Mammary epithelial cell (primary cell): ENCODE measurements at regions of chr3 and their contacts with region 1.

Region 1: DNA sequence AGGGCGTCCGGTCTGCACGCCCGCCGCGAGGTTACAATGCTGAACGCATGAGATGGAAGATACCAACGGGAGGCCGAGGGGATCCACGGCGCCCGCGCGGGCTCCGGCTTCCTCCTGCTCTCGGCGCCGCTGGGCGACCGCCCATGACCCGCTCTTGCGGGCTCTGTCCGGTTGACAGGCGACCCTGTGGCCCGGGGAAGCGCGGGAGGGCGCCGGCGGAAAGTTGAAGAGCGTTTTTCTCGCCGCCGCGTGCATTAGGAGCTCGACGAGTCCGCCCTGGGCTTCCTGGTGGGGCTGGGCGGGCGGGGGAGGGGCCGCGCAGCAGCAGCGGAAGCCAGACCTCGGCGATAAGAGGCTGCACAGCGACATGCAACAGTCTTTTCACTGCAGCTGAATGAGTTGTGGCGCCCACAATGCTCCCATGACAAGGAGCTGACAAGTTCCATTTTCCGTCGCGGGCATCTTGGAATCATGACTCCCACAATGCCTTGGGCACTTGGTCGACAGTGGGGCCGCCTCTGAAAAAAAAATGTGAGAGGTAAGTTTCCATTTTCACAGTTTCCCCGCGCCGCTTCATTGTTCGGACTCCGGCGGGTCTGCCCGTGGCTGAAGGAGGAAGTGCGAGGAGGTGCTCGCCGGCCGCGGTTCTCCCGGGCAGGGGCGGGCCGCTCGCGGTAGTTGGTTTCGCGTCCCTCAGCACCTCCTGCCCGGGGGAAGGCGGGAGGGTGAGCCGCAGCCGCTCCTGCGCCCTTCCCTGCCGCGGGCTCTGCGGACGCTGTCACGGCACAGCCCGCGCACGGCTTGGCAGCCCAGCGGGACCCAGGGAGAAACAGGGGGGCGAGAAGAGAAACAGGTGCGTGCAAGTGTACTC is at the start of gene MBNL1:
- DNase-seq: peak; percentile 78
- H3K4me3 ChIP-seq: peak within 1 kb of the TSS; percentile 62 to 87 (median 66)
- H3K27ac ChIP-seq: peak within 1 kb of the TSS; percentile 90
- H3K4me1 ChIP-seq: peaks cover 33% of the 10 kb centered on the region
- H3K27me3 ChIP-seq: no peaks in the 10 kb centered on the region
- CTCF ChIP-seq: no peak
- total RNA-seq, gene MBNL1: 107 to 188 TPM

Region 2: GRCh38 chr3:151871639-151872468 is 396.9 kb before region 1 on chr3:
- CTCF ChIA-PET with region 1: no interaction called
- dilution Hi-C with region 1: no loop called
- in situ Hi-C with region 1: no loop called
- intact Hi-C with region 1: no loop called
- DNase-seq: no peak
- H3K4me3 ChIP-seq: no peak overlapping the region
- H3K27ac ChIP-seq: no peak overlapping the region
- H3K4me1 ChIP-seq: no peaks in the 10 kb centered on the region
- H3K27me3 ChIP-seq: no peaks in the 10 kb centered on the region
- CTCF ChIP-seq: no peak

Region 3: GRCh38 chr3:152026033-152026556 is 242.7 kb before region 1 on chr3:
- CTCF ChIA-PET with region 1: no interaction called
- dilution Hi-C with region 1: no loop called
- in situ Hi-C with region 1: no loop called
- intact Hi-C with region 1: loop called (anchors 5 kb)
- DNase-seq: peak; percentile 66
- H3K4me3 ChIP-seq: peak overlapping the region in 1 of 3 experiments; percentile 33
- H3K27ac ChIP-seq: peak overlapping the region; percentile 67
- H3K4me1 ChIP-seq: peaks cover 36% of the 10 kb centered on the region
- H3K27me3 ChIP-seq: no peaks in the 10 kb centered on the region
- CTCF ChIP-seq: peak; percentile 13 to 20

Region 4: DNA sequence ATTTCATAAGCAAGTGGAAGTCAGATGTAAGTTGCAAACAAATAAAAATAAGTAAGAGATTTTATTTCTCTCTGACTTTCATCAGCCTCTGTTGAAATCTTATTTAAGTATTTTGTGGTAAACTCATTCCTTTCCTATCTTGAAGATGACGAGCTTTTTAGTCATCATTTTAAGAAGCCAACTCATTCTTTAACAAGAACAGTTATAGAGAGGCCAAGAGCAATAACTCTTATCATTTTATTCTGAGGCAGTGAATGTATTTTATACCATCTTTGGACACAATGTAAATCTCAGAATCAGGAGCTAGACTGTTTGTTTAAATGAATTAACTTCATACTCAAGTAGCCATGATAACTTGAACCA is 147.5 kb before region 1 on chr3:
- CTCF ChIA-PET with region 1: no interaction called
- dilution Hi-C with region 1: no loop called
- in situ Hi-C with region 1: no loop called
- intact Hi-C with region 1: loop called (anchors 1 kb)
- DNase-seq: peak; percentile 77
- H3K4me3 ChIP-seq: peak overlapping the region in 1 of 3 experiments; percentile 33
- H3K27ac ChIP-seq: peak overlapping the region; percentile 78
- H3K4me1 ChIP-seq: peaks cover 38% of the 10 kb centered on the region
- H3K27me3 ChIP-seq: no peaks in the 10 kb centered on the region
- CTCF ChIP-seq: no peak

Region 5: GRCh38 chr3:152298393-152299242 is 29.8 kb after region 1 on chr3:
- CTCF ChIA-PET with region 1: no interaction called
- dilution Hi-C with region 1: no loop called
- in situ Hi-C with region 1: no loop called
- intact Hi-C with region 1: loop called (anchors 2 kb)
- DNase-seq: peak; percentile 89
- H3K4me3 ChIP-seq: peak overlapping the region; percentile 32 to 52 (median 47)
- H3K27ac ChIP-seq: peak overlapping the region; percentile 79
- H3K4me1 ChIP-seq: peaks cover 39% of the 10 kb centered on the region
- H3K27me3 ChIP-seq: no peaks in the 10 kb centered on the region
- CTCF ChIP-seq: no peak

Region 6: DNA sequence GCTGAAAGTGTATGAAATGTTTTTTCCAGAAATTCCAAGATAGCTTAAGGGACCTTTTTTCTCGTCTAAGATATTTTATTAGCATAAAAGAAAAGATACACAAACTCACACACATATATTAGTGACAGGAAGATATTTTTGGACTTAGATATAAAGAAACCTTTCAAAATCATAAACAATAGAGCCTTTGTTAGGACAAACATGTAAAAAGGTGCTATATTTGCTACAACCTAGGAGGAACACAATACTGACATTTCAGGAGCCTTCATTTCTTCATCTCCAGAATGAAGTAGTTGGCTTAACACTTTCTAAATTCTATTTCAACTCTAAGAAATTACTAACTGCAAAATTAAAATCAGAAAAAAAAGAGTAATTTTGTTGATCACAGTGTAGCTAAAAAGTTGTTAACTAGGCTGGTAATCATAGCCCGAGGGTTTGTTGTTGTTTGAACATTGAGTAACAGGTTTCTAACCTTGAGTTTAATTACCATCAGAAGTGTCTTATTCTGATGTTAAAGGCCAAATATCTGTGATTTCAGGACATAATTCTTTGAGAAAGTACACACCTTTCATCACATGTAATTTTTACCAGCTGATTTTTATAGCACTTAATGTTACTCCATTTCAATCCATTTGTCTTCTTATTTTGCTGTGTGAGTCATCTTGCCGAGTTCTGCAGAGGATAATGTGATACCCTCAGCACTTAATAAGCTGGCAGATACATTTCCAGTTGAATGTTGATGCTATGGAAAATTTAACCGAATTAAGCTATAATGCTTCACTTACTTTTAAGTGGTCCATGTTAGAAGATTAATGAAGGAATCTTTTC is 97.2 kb after region 1 on chr3:
- CTCF ChIA-PET with region 1: no interaction called
- dilution Hi-C with region 1: no loop called
- in situ Hi-C with region 1: no loop called
- intact Hi-C with region 1: no loop called
- DNase-seq: peak; percentile 51
- H3K4me3 ChIP-seq: no peak overlapping the region
- H3K27ac ChIP-seq: no peak overlapping the region
- H3K4me1 ChIP-seq: peaks cover 6% of the 10 kb centered on the region
- H3K27me3 ChIP-seq: no peaks in the 10 kb centered on the region
- CTCF ChIP-seq: no peak

Region 7: GRCh38 chr3:152444029-152444641 is 175.3 kb after region 1 on chr3:
- CTCF ChIA-PET with region 1: no interaction called
- dilution Hi-C with region 1: no loop called
- in situ Hi-C with region 1: no loop called
- intact Hi-C with region 1: loop called (anchors 2 kb)
- DNase-seq: peak; percentile 42
- H3K4me3 ChIP-seq: no peak overlapping the region
- H3K27ac ChIP-seq: no peak overlapping the region
- H3K4me1 ChIP-seq: no peaks in the 10 kb centered on the region
- H3K27me3 ChIP-seq: no peaks in the 10 kb centered on the region
- CTCF ChIP-seq: peak; percentile 49 to 64

Region 8: DNA sequence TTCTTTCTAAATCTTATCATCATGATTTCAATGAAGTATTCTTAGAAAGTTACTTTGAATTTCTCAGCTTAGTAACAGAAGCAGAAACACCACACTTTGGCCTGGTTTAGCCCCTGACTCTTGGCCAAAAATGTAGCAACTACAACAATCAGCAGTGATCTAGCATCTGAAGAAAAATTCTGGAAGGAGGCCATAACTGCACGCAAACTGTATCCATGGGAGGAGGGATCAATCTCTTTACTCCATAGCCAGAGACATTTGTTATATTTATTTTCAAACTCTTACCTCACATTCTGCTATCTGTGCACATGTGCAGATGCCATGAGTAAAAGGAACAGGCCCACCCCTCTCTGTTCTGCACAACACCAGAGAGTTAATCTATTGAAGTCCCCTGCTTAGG is 315.2 kb after region 1 on chr3:
- CTCF ChIA-PET with region 1: no interaction called
- dilution Hi-C with region 1: no loop called
- in situ Hi-C with region 1: no loop called
- intact Hi-C with region 1: no loop called
- DNase-seq: no peak
- H3K4me3 ChIP-seq: no peak overlapping the region
- H3K27ac ChIP-seq: no peak overlapping the region
- H3K4me1 ChIP-seq: no peaks in the 10 kb centered on the region
- H3K27me3 ChIP-seq: peaks cover 6% of the 10 kb centered on the region
- CTCF ChIP-seq: no peak